Heart right ventricle (tissue), 16 donors: ENCODE measurements at regions of chr2 and their contacts with region 1.

Region 1: DNA sequence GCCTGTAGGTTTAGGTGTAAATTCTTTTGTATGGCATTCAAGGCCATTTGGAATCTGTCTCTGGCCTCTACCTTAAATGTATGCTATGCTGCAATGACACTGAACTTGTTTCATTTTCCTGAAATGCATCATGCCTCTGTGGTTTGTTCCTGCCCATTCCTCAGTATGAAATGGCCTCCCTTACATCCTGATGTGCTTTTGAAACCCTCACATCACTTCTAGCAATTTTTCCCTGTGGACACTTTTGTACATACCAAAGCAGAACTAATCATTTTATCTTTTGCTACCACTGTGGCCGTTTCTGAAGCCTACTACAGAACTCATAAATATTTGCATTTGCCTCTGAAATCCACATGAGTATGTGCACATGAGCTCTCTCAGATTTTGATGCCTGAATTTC is 557.2 kb downstream of the ERBB4 start:
- DNase-seq: no peak
- ATAC-seq: no peak
- H3K4me3 ChIP-seq: no peak overlapping the region
- H3K27ac ChIP-seq: no peak overlapping the region
- H3K4me1 ChIP-seq: peaks cover 0 to 8% (median 0%) of the 10 kb centered on the region in 9 donors
- H3K27me3 ChIP-seq: no peaks in the 10 kb centered on the region
- CTCF ChIP-seq: no peak

Region 2: DNA sequence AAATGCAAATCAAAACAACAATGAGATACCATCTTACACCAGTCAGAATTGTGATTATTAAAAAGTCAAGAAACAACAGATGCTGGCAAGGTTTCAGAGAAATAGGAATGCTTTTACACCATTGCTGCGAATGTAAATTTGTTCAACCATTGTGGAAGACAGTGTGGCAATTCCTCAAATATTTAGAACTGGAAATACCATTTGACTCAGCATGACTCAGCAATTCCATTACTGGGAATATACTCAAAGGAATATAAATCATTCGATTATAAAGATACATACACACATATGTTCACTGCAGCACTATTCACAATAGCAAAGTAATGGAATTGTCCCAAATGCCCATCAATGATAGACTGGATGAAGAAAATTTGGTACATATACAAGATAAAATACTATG is 40.5 kb after region 1 on chr2:
- intact Hi-C with region 1: loop called in 1 of 10 experiments (anchors 1 kb)
- DNase-seq: no peak
- ATAC-seq: no peak
- H3K4me3 ChIP-seq: no peak overlapping the region
- H3K27ac ChIP-seq: no peak overlapping the region
- H3K4me1 ChIP-seq: no peaks in the 10 kb centered on the region
- H3K27me3 ChIP-seq: no peaks in the 10 kb centered on the region
- CTCF ChIP-seq: no peak

Region 3: DNA sequence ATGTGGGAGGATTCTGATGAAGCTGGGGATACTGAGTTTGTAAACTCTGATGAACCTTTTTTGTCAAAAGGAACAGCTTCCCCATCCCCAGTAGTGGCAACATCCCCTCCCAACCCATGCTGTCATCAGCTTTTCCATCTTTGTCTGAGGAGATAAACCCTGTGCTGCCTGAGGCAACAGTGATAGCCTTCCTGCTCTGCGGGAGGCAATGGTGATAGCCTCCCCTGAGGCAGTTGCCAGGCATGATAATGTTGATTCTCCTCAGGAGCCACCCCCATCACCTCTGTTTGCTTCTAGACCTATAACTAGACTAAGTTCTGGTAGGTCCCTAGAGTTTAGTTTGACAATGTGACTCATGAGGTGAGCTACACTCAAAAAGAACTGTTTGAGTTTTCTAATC is 459.7 kb after region 1 on chr2:
- intact Hi-C with region 1: no loop called
- DNase-seq: no peak
- ATAC-seq: no peak
- H3K4me3 ChIP-seq: no peak overlapping the region
- H3K27ac ChIP-seq: no peak overlapping the region
- H3K4me1 ChIP-seq: no peaks in the 10 kb centered on the region
- H3K27me3 ChIP-seq: no peaks in the 10 kb centered on the region
- CTCF ChIP-seq: no peak